GM13976 (cell line): ENCODE measurements at regions of chr7 and their contacts with region 1.

Region 1: GRCh38 chr7:33185786-33186185 is 56.4 kb downstream of the BBS9 start:
- DNase-seq: peak; percentile 53
- CTCF ChIP-seq: peak; percentile 68

Region 2: GRCh38 chr7:32569388-32570289 is 616.1 kb before region 1 on chr7:
- in situ Hi-C with region 1: no loop called
- DNase-seq: no peak
- CTCF ChIP-seq: no peak

Region 3: DNA sequence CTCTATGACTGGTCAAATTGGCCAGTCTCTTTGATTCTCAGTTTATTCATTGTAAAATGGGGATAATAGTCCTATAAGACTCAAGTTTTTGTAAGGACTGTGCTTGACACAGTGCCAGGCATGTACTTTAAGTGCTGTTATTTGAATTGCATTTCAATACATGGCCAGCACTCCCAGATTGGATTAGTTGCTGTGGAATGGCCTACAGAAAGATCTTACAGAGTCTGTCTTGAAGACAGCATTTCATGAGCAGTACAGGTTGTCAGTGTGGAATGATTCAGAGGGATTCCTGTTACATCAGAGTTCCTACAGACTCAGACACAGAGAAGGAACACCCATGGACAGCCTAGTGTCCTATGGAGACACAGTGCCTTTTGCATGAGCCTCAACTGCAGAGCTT is 481.4 kb after region 1 on chr7:
- in situ Hi-C with region 1: no loop called
- DNase-seq: no peak
- CTCF ChIP-seq: no peak

Region 4: GRCh38 chr7:33932832-33933468 is 747.2 kb after region 1 on chr7:
- in situ Hi-C with region 1: loop called (anchors 25 kb)
- DNase-seq: peak; percentile 62
- CTCF ChIP-seq: peak; percentile 77